Endothelial cell of umbilical vein (primary cell): ENCODE measurements at regions of chr12 and their contacts with region 1.

Region 1: GRCh38 chr12:7995266-7995963 is 37.1 kb upstream of the FOXJ2 start:
- DNase-seq: peak; percentile 75
- H3K4me3 ChIP-seq: no peak overlapping the region
- H3K27ac ChIP-seq: no peak overlapping the region
- H3K4me1 ChIP-seq: no peaks in the 10 kb centered on the region
- H3K27me3 ChIP-seq: no peaks in the 10 kb centered on the region
- CTCF ChIP-seq: peak; percentile 61 to 76
- POLR2A ChIP-seq: no peak

Region 2: DNA sequence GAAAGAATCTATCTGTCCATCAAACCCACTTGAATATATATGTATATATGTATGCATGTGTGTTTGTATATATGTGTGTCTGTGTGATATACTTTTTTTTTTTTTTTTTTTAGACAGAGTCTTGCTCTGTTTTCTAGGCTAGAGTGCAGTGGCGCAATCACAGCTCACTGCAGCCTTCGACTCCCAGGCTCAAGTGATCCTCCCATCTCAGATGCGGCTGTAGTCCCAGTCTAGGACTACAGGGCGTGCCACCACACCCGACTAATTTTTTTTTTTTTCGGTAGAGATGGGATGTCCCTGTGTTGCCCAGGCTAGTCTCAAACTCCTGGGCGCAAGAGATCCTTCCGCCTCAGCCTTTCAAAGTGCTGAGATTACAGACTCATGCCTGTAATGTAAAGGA is 316.7 kb before region 1 on chr12:
- CTCF ChIA-PET with region 1: interaction called, 5 read pairs
- POLR2A ChIA-PET with region 1: no interaction called
- dilution Hi-C with region 1: no loop called
- intact Hi-C with region 1: loop called (anchors 10 kb)
- DNase-seq: peak; percentile 23
- H3K4me3 ChIP-seq: no peak overlapping the region
- H3K27ac ChIP-seq: no peak overlapping the region
- H3K4me1 ChIP-seq: peaks cover 3% of the 10 kb centered on the region
- H3K27me3 ChIP-seq: peaks cover 0 to 6% of the 10 kb centered on the region in 2 experiments
- CTCF ChIP-seq: no peak
- POLR2A ChIP-seq: no peak

Region 3: GRCh38 chr12:7832059-7832696 is 163.2 kb before region 1 on chr12:
- CTCF ChIA-PET with region 1: interaction called, 9 read pairs
- POLR2A ChIA-PET with region 1: no interaction called
- dilution Hi-C with region 1: no loop called
- intact Hi-C with region 1: loop called (anchors 1 kb)
- DNase-seq: peak; percentile 58
- H3K4me3 ChIP-seq: no peak overlapping the region
- H3K27ac ChIP-seq: no peak overlapping the region
- H3K4me1 ChIP-seq: no peaks in the 10 kb centered on the region
- H3K27me3 ChIP-seq: peaks cover 0 to 2% of the 10 kb centered on the region in 2 experiments
- CTCF ChIP-seq: peak; percentile 44 to 45
- POLR2A ChIP-seq: no peak

Region 4: DNA sequence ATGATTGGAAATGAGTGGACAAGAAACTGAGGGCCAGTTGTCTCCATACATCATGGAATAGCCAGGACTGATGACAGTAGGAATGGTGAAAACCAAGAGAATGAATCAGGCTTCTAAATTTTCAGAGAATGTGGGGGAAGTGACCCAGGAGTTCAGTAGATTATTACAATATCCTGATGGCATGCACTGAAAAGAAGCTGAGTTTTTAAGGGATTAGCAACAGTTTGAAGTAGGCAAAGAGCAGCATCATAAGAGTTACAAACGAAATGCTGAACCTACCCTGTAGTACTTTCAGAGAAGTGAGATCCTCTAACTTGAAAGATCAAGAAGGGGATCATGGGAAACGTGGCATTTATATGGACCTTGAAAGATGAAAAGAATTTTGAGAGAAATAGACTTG is 135.9 kb before region 1 on chr12:
- CTCF ChIA-PET with region 1: interaction called, 3 read pairs
- POLR2A ChIA-PET with region 1: no interaction called
- dilution Hi-C with region 1: no loop called
- intact Hi-C with region 1: loop called (anchors 1 kb)
- DNase-seq: no peak
- H3K4me3 ChIP-seq: no peak overlapping the region
- H3K27ac ChIP-seq: no peak overlapping the region
- H3K4me1 ChIP-seq: no peaks in the 10 kb centered on the region
- H3K27me3 ChIP-seq: no peaks in the 10 kb centered on the region
- CTCF ChIP-seq: no peak
- POLR2A ChIP-seq: no peak

Region 5: GRCh38 chr12:7959701-7960121 is 35.7 kb before region 1 on chr12:
- CTCF ChIA-PET with region 1: interaction called, 28 read pairs
- POLR2A ChIA-PET with region 1: no interaction called
- dilution Hi-C with region 1: no loop called
- intact Hi-C with region 1: loop called (anchors 2 kb)
- DNase-seq: peak; percentile 3
- H3K4me3 ChIP-seq: no peak overlapping the region
- H3K27ac ChIP-seq: no peak overlapping the region
- H3K4me1 ChIP-seq: peaks cover 21% of the 10 kb centered on the region
- H3K27me3 ChIP-seq: no peaks in the 10 kb centered on the region
- CTCF ChIP-seq: no peak
- POLR2A ChIP-seq: no peak